ENCODE measurements at regions of chrX and their contacts with region 1.

Region 1: DNA sequence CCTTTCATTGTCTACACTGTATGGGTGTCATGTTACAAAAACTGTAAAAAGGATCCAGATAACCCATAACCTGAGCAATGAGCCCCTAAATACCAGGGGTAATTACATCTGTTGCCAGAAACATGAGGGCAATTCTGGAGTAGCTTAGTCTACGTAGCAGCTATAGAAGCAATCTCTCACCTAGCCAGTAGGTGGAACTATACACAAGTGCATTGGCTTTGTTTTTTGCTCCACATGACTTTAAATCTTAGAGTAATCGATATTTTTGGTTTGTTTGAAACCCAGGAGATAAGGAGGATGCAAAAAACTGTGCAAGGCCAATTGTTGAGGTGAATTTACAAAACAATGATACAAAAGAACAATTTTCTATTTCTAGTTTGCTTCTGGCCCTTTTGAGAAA is 57.5 kb downstream of the GPR82 start:
- DNase-seq: peak in 6 of 9 donors; percentile 12 to 34 (median 24)
- ATAC-seq: peak; percentile 67
- H3K4me3 ChIP-seq: no peak overlapping the region
- H3K4me3 Mint-ChIP-seq: peak overlapping the region in 1 of 10 donors; percentile 6
- H3K27ac ChIP-seq: no peak overlapping the region
- H3K27ac Mint-ChIP-seq: peak overlapping the region in 1 of 9 donors; percentile 70
- H3K4me1 ChIP-seq: no peaks in the 10 kb centered on the region
- H3K4me1 Mint-ChIP-seq: peaks cover 0 to 24% (median 7%) of the 10 kb centered on the region in 7 donors
- H3K27me3 ChIP-seq: no peaks in the 10 kb centered on the region
- H3K27me3 Mint-ChIP-seq: no peaks in the 10 kb centered on the region

Region 2: DNA sequence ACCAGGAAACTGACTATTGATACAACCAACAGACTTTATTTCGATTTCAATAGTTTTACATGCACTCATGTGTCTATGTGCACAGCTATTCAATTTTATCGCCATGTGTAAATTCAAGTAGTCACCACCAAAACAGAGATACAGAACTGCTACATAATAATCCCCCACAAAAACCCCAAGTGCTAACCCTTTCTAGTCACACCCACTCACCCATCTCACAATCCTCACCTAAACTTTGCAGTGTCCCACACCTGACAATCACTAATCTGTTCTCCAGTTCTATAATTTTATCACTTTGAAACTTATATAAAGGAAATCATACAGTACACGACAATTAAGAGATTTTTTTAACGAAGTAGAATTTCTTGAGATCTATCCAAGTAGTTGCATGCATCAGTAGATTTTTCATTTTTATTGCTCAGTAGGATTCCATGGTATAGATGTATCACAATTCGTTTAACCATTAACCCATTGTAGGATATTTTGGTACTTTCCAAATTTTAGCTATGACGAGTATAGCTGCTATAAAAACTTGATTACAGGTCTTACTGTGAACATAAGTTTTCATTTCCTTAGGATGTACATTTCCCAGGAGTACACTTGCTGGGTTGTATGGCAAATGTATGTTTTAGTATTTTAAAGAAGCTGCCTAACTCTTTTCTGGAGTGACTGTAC is 55.9 kb after region 1 on chrX:
- CTCF ChIA-PET with region 1: no interaction called
- POLR2A ChIA-PET with region 1: no interaction called
- intact Hi-C with region 1: no loop called
- DNase-seq: no peak
- ATAC-seq: no peak
- H3K4me3 ChIP-seq: no peak overlapping the region
- H3K4me3 Mint-ChIP-seq: peak overlapping the region in 1 of 10 donors; percentile 6
- H3K27ac ChIP-seq: no peak overlapping the region
- H3K27ac Mint-ChIP-seq: no peak overlapping the region
- H3K4me1 ChIP-seq: peaks cover 0 to 4% of the 10 kb centered on the region in 2 donors
- H3K4me1 Mint-ChIP-seq: peaks cover 0 to 34% (median 4%) of the 10 kb centered on the region in 7 donors
- H3K27me3 ChIP-seq: no peaks in the 10 kb centered on the region
- H3K27me3 Mint-ChIP-seq: no peaks in the 10 kb centered on the region

Region 3: DNA sequence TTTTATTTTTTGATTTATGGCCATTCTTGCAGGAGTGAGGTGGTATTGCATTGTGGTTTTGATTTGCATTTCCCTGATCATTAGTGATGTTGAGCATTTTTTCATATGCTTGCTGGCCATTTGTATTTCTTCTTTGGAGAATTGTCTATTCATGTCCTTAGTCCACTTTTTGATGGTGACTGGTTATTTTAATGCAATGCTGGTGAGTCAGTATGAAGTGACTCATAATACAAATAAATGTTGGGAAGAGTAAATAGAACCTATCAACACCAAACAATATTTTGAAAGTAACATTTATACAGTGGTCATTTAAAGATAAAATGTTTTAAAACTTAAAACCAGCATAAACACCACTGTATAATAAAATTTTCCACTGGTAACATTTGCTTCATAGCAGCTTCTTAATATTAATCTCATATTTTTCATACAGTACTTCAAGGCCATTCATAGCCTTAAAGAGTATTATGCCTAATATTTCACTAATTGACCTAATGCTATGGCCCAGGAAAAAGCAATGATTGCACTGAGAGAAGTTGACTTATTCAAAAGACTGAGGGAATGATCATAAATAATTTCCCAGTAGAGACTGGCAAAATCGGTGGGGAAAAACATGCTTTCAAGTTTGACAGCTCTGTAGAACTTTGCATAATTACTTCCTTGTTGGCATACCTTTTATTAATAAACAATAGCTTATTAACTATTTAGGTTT is 108.0 kb after region 1 on chrX:
- CTCF ChIA-PET with region 1: no interaction called
- POLR2A ChIA-PET with region 1: no interaction called
- intact Hi-C with region 1: no loop called
- DNase-seq: no peak
- ATAC-seq: no peak
- H3K4me3 ChIP-seq: no peak overlapping the region
- H3K4me3 Mint-ChIP-seq: no peak overlapping the region
- H3K27ac ChIP-seq: no peak overlapping the region
- H3K27ac Mint-ChIP-seq: no peak overlapping the region
- H3K4me1 ChIP-seq: peaks cover 0 to 3% of the 10 kb centered on the region in 2 donors
- H3K4me1 Mint-ChIP-seq: peaks cover 5 to 41% (median 22%) of the 10 kb centered on the region in 7 donors
- H3K27me3 ChIP-seq: no peaks in the 10 kb centered on the region
- H3K27me3 Mint-ChIP-seq: no peaks in the 10 kb centered on the region

Region 4: DNA sequence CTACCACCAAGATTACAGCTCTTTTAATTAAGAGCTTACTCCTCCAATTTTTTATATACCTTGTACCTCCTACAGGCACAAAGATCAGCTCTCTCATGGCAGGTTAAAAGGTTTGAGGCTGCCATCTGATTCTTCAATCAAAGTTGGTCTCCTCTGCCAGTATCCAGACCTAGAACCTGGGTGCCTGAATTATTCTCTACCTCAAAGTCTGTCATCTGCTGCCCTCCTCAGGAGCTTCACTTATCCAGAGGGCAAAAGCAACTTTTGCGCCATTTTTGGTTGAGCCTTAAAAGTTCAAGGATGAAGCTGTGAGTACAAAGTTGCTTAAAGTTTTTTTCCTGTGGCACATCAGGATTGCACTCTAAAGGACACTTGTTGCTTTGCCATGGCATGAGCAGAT is 1340.1 kb after region 1 on chrX:
- CTCF ChIA-PET with region 1: no interaction called
- POLR2A ChIA-PET with region 1: no interaction called
- intact Hi-C with region 1: loop called in 1 of 2 experiments (anchors 1 kb)
- DNase-seq: peak in 5 of 9 donors; percentile 1 to 27 (median 15)
- ATAC-seq: no peak
- H3K4me3 ChIP-seq: no peak overlapping the region
- H3K4me3 Mint-ChIP-seq: no peak overlapping the region
- H3K27ac ChIP-seq: no peak overlapping the region
- H3K27ac Mint-ChIP-seq: peak overlapping the region in 1 of 9 donors; percentile 17
- H3K4me1 ChIP-seq: no peaks in the 10 kb centered on the region
- H3K4me1 Mint-ChIP-seq: peaks cover 0 to 8% (median 3%) of the 10 kb centered on the region in 7 donors
- H3K27me3 ChIP-seq: no peaks in the 10 kb centered on the region
- H3K27me3 Mint-ChIP-seq: no peaks in the 10 kb centered on the region

Region 5: GRCh38 chrX:43349363-43349762 is 1567.9 kb after region 1 on chrX:
- CTCF ChIA-PET with region 1: no interaction called
- POLR2A ChIA-PET with region 1: no interaction called
- intact Hi-C with region 1: loop called in 1 of 2 experiments (anchors 5 kb)
- DNase-seq: peak in 7 of 9 donors; percentile 2 to 28 (median 21)
- ATAC-seq: no peak
- H3K4me3 ChIP-seq: no peak overlapping the region
- H3K4me3 Mint-ChIP-seq: no peak overlapping the region
- H3K27ac ChIP-seq: no peak overlapping the region
- H3K27ac Mint-ChIP-seq: no peak overlapping the region
- H3K4me1 ChIP-seq: no peaks in the 10 kb centered on the region
- H3K4me1 Mint-ChIP-seq: peaks cover 0 to 15% (median 8%) of the 10 kb centered on the region in 7 donors
- H3K27me3 ChIP-seq: no peaks in the 10 kb centered on the region
- H3K27me3 Mint-ChIP-seq: no peaks in the 10 kb centered on the region

Region 6: GRCh38 chrX:43750248-43750676 is 1968.8 kb after region 1 on chrX:
- CTCF ChIA-PET with region 1: interaction called, 4 read pairs
- POLR2A ChIA-PET with region 1: no interaction called
- intact Hi-C with region 1: loop called in 1 of 2 experiments (anchors 1 kb)
- DNase-seq: peak in 8 of 9 donors; percentile 18 to 65 (median 40)
- ATAC-seq: peak; percentile 72
- H3K4me3 ChIP-seq: no peak overlapping the region
- H3K4me3 Mint-ChIP-seq: no peak overlapping the region
- H3K27ac ChIP-seq: no peak overlapping the region
- H3K27ac Mint-ChIP-seq: no peak overlapping the region
- H3K4me1 ChIP-seq: no peaks in the 10 kb centered on the region
- H3K4me1 Mint-ChIP-seq: peaks cover 0 to 7% (median 0%) of the 10 kb centered on the region in 7 donors
- H3K27me3 ChIP-seq: no peaks in the 10 kb centered on the region
- H3K27me3 Mint-ChIP-seq: no peaks in the 10 kb centered on the region

Measured in naive thymus-derived CD4-positive, alpha-beta T cell (primary cell).